ENCODE measurements at regions of chr6 and their contacts with region 1.

Region 1: GRCh38 chr6:29976588-29977424 is 34.5 kb downstream of the HLA-A start:
- DNase-seq: peak; percentile 51 to 91
- H3K4me3 ChIP-seq: peak overlapping the region; percentile 46 to 61
- H3K27ac ChIP-seq: peak overlapping the region; percentile 91 to 96
- H3K4me1 ChIP-seq: peaks cover 0 to 12% of the 10 kb centered on the region in 2 donors
- H3K27me3 ChIP-seq: no peaks in the 10 kb centered on the region
- CTCF ChIP-seq: peak; percentile 16 to 42 (median 33)

Region 2: GRCh38 chr6:29752451-29753308 is 224.1 kb before region 1 on chr6:
- intact Hi-C with region 1: loop called (anchors 2 kb)
- DNase-seq: peak; percentile 74 to 96
- H3K4me3 ChIP-seq: peak overlapping the region; percentile 72 to 76
- H3K27ac ChIP-seq: peak overlapping the region; percentile 94 to 96
- H3K4me1 ChIP-seq: peaks cover 8 to 10% of the 10 kb centered on the region in 2 donors
- H3K27me3 ChIP-seq: no peaks in the 10 kb centered on the region
- CTCF ChIP-seq: peak; percentile 94 to 96 (median 96)

Region 3: DNA sequence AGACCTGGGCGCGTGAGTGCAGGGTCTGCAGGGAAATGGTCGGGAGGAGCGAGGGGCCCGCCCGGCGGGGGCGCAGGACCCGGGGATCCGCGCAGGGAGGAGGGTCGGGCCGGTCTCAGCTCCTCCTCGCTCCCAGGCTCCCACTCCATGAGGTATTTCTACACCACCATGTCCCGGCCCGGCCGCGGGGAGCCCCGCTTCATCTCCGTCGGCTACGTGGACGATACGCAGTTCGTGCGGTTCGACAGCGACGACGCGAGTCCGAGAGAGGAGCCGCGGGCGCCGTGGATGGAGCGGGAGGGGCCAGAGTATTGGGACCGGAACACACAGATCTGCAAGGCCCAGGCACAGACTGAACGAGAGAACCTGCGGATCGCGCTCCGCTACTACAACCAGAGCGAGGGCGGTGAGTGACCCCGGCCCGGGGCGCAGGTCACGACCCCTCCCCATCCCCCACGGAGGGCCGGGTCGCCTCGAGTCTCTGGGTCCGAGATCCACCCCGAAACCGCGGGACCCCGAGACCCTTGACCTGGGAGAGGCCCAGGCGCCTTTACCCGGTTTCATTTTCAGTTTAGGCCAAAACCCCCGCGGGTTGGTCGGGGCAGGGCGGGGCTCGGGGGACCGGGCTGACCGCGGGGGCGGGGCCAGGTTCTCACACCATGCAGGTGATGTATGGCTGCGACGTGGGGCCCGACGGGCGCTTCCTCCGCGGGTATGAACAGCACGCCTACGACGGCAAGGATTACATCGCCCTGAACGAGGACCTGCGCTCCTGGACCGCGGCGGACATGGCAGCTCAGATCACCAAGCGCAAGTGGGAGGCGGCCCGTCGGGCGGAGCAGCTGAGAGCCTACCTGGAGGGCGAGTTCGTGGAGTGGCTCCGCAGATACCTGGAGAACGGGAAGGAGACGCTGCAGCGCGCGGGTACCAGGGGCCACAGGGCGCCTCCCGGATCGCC is 88.7 kb before region 1 on chr6:
- intact Hi-C with region 1: loop called (anchors 1 kb)
- DNase-seq: peak in 1 of 2 donors; percentile 92
- H3K4me3 ChIP-seq: peak overlapping the region in 1 of 2 donors; percentile 82
- H3K27ac ChIP-seq: peak overlapping the region in 1 of 2 donors; percentile 97
- H3K4me1 ChIP-seq: peaks cover 0 to 5% of the 10 kb centered on the region in 2 donors
- H3K27me3 ChIP-seq: no peaks in the 10 kb centered on the region
- CTCF ChIP-seq: no peak

Region 4: GRCh38 chr6:29942275-29943052 is 34.3 kb before region 1 on chr6 and contains the start of gene HLA-A:
- intact Hi-C with region 1: loop called (anchors 1 kb)
- DNase-seq: peak; percentile 85 to 98
- H3K4me3 ChIP-seq: peak within 1 kb of the TSS; percentile 67 to 68
- H3K27ac ChIP-seq: peak within 1 kb of the TSS; percentile 85 to 94
- H3K4me1 ChIP-seq: peaks cover 0 to 4% of the 10 kb centered on the region in 2 donors
- H3K27me3 ChIP-seq: no peaks in the 10 kb centered on the region
- CTCF ChIP-seq: no peak
- total RNA-seq, gene HLA-A: 1,099 TPM

Region 5: GRCh38 chr6:30066577-30067459 is 90.0 kb after region 1 on chr6 and contains the start of gene PPP1R11:
- intact Hi-C with region 1: loop called (anchors 1 kb)
- DNase-seq: peak; percentile 98 to 99
- H3K4me3 ChIP-seq: peak within 1 kb of the TSS; percentile 75 to 77
- H3K27ac ChIP-seq: peak within 1 kb of the TSS; percentile 77 to 85
- H3K4me1 ChIP-seq: peaks cover 4 to 20% of the 10 kb centered on the region in 2 donors
- H3K27me3 ChIP-seq: no peaks in the 10 kb centered on the region
- CTCF ChIP-seq: no peak
- total RNA-seq, gene PPP1R11: 7.1 TPM

Measured in ascending aorta (tissue), 2 donors.